ENCODE measurements at regions of chr6 and their contacts with region 1.

Region 1: DNA sequence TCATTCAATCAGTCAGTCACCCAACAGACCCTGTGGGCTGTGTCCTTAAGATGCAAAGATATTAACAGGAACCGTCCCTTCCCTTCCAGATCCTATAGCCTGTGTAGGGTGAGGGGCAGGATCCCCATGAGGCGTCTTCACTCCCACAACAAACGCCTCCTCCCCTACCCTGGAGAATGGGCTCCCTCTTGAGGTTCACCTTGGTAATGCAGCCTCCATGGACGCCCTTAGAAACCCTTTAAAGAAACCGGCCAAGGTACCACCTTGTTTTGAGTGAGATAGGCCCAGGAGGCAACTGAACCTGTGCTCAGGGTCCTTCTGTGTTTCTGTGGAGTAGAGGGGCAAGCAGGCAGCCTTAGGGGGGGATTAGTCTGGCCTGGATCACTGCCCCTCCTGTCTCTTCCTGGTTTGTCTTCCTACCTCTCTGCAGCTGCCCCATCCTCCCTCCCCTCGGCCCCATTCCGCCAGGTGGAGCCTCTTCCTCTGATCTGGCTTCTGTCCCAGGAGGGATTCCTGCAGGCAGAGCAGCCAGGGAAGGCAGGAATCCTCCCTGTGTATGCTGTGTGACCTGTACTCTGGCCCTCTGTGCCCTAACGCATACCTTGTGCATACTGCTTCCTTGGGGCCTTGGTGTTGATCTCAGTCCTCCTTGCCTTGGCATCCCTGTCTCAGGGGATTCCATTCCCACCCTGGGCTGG is 6.6 kb upstream of the GUCA1A start:
- DNase-seq: no peak
- H3K4me3 ChIP-seq: no peak overlapping the region
- H3K27ac ChIP-seq: no peak overlapping the region
- H3K4me1 ChIP-seq: peaks cover 0 to 3% (median 0%) of the 10 kb centered on the region in 6 donors
- H3K27me3 ChIP-seq: peaks cover 0 to 5% (median 0%) of the 10 kb centered on the region in 7 donors
- CTCF ChIP-seq: peak; percentile 87 to 97 (median 94)
- POLR2A ChIP-seq: no peak

Region 2: DNA sequence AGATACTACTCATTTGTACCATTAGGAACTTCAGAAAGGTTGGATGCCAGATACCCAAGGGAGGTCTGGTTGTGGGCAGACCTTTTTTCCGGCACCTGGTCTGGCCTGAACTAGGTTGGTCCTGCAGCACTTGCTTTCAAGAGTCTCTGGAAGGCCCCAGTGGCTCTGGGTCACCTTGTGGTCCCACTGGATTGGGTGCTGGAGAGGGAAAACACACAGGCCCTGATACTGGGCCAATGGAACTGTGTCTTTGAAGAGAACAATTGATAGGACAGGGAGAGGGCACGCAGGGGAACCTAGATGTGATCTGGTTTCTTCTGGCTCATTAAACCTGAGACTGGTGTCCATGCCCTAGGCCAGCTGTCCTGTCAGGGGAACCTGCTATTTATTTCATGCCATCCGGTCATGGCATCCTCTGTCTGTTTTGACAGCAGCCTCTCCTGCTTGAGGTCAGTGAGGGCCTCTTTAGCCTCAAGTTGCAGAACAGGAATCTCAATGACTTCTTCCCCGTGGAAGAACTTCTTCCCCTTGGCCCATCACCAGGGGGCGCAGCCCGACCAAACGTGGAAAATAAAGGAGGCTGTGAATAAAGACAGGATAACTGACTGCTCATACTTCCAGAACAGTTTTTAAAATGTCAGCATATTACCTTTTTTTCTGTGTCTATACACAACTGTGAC is 91.3 kb before region 1 on chr6:
- intact Hi-C with region 1: loop called (anchors 5 kb)
- DNase-seq: peak; percentile 87
- H3K4me3 ChIP-seq: no peak overlapping the region
- H3K27ac ChIP-seq: no peak overlapping the region
- H3K4me1 ChIP-seq: peaks cover 0 to 9% (median 0%) of the 10 kb centered on the region in 6 donors
- H3K27me3 ChIP-seq: no peaks in the 10 kb centered on the region
- CTCF ChIP-seq: peak in 10 of 11 experiments; percentile 24 to 79 (median 70)
- POLR2A ChIP-seq: no peak

Region 3: GRCh38 chr6:42453031-42453653 is 286.5 kb after region 1 on chr6:
- intact Hi-C with region 1: no loop called
- DNase-seq: peak; percentile 94
- H3K4me3 ChIP-seq: peak overlapping the region; percentile 67 to 98 (median 93)
- H3K27ac ChIP-seq: peak overlapping the region; percentile 76 to 93 (median 88)
- H3K4me1 ChIP-seq: peaks cover 3 to 62% (median 36%) of the 10 kb centered on the region in 6 donors
- H3K27me3 ChIP-seq: peaks cover 0 to 39% (median 0%) of the 10 kb centered on the region in 7 donors
- CTCF ChIP-seq: peak in 1 of 11 experiments; percentile 8
- POLR2A ChIP-seq: peak in 1 of 3 donors; percentile 6